Breast epithelium (tissue), 4 donors: ENCODE measurements at regions of chr2 and their contacts with region 1.

Region 1: DNA sequence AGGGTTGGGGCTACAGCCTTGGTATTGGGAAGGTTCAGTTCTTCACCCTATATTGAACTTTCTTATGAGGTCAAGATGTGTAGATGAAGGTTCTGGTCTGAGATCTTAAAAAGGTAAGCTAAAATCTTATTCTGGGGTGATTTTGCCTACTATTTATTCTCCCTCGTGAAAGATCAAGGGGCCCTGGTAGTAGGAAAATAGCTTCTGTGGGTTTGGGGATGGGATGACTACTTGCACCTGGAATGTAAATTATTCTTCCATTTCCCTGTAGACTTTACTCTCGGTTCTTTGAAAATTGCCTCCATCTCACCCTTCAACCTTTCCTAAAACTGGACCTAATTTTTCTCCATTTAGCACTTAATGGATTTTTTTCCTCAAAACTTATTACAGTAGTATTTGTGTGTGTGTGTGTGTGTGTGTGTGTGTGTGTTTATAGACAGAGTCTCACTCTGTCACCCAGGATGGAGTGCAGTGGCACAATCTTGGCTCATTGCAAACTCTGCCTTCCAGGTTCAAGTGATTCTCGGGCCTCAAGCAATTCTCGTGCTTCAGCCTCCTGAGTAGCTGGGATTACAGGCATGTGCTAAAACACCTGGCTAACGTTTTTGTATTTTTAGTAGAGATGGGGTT is 37.4 kb downstream of the CCDC195 start:
- DNase-seq: no peak
- H3K4me3 ChIP-seq: no peak overlapping the region
- H3K27ac ChIP-seq: no peak overlapping the region
- H3K4me1 ChIP-seq: no peaks in the 10 kb centered on the region
- H3K27me3 ChIP-seq: no peaks in the 10 kb centered on the region
- CTCF ChIP-seq: no peak
- POLR2A ChIP-seq: no peak

Region 2: DNA sequence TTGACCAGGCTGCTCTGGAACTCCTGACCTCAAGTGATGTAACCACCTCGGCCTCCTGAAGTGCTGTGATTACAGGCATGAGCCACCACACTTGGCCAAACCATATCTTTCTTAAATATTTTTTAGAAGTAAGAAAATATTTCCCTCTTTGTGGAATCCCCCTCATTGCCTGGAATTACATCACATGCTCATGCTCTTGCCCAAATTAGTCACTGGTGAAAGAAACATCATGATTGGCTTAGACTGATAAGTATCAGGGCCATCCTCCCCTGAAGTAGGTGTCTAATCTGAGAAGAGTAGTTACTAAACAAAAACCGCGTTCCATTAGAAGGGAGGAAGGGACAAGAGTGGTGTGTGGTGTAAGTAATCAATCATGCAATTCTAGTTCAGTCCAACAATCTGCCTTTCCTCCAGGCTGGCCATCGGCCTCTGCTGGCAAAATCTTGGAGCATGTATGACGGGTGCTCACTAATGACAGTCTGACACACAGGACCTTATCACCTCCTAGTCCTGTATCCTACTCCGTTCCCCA is 1024.3 kb before region 1 on chr2:
- intact Hi-C with region 1: loop called (anchors 10 kb)
- DNase-seq: no peak
- H3K4me3 ChIP-seq: no peak overlapping the region
- H3K27ac ChIP-seq: no peak overlapping the region
- H3K4me1 ChIP-seq: no peaks in the 10 kb centered on the region
- H3K27me3 ChIP-seq: no peaks in the 10 kb centered on the region
- CTCF ChIP-seq: no peak
- POLR2A ChIP-seq: no peak

Region 3: GRCh38 chr2:224865016-224865415 is 186.3 kb after region 1 on chr2:
- intact Hi-C with region 1: no loop called
- DNase-seq: no peak
- H3K4me3 ChIP-seq: no peak overlapping the region
- H3K27ac ChIP-seq: no peak overlapping the region
- H3K4me1 ChIP-seq: no peaks in the 10 kb centered on the region
- H3K27me3 ChIP-seq: no peaks in the 10 kb centered on the region
- CTCF ChIP-seq: no peak
- POLR2A ChIP-seq: no peak